SK-MEL-5 (cell line): ENCODE measurements at regions of chr11 and their contacts with region 1.

Region 1: GRCh38 chr11:69368119-69368881 is 74.3 kb downstream of the MYEOV start:
- DNase-seq: no peak

Region 2: GRCh38 chr11:69317401-69318092 is 50.8 kb before region 1 on chr11:
- in situ Hi-C with region 1: loop called (anchors 5 kb)
- DNase-seq: no peak

Region 3: DNA sequence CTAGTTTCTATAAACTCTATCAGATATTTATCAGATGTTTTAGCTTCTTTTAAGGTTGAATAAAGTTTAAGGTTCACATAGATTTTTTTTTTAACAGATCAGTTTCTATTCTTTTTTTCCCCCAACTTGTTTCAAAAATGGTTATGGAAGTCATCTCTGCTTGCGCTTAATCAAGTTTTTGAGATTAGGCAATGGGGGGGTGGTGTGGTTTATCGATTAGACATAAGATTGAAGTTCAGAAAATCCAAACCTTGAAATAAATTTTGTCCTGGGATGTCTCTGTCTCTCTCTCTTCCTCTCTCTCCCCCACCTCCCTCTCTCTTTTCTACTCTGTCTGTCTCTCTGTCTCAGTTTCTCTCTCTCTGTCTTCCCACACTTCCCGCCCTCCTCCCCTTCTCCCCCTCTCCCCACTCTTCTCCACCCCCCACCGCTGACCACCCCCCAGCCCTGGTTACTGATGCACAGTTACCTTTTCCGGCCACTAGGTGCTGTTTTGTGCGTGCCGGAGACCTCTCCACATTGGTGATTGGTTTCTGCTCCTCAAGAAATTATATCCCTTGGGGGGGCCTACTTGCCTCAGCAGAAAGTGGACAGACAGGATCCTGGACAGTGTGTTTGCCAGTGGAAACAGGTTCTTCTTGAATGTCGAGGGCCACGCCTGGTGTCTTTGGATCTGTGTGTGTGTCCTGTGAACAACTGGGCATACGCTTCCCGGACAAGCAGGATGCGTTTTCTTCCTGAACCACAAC is 680.2 kb after region 1 on chr11:
- in situ Hi-C with region 1: no loop called
- DNase-seq: peak; percentile 81